ENCODE measurements at regions of chr15 and their contacts with region 1.

Region 1: GRCh38 chr15:98983333-98983732 is 24.3 kb downstream of the PGPEP1L start:
- DNase-seq: no peak
- ATAC-seq: peak; percentile 37

Region 2: GRCh38 chr15:98484908-98485307 is 498.4 kb before region 1 on chr15:
- intact Hi-C with region 1: loop called in 1 of 2 experiments (anchors 10 kb)
- DNase-seq: no peak
- ATAC-seq: no peak

Measured in left colon (tissue), 2 donors.